H1 (cell line): ENCODE measurements at regions of chr4 and their contacts with region 1.

Region 1: GRCh38 chr4:73653695-73654106 is 33.5 kb upstream of the RASSF6 start:
- DNase-seq: no peak
- H3K4me3 ChIP-seq: no peak overlapping the region
- H3K27ac ChIP-seq: no peak overlapping the region
- H3K4me1 ChIP-seq: no peaks in the 10 kb centered on the region
- H3K27me3 ChIP-seq: peaks cover 0 to 2% (median 0%) of the 10 kb centered on the region in 4 experiments; a peak in 1 of 7 replicates
- CTCF ChIP-seq: peak; percentile 17 to 70 (median 44)
- EP300 ChIP-seq: no peak
- POLR2A ChIP-seq: no peak
- RAD21 ChIP-seq: peak; percentile 89 to 90

Region 2: DNA sequence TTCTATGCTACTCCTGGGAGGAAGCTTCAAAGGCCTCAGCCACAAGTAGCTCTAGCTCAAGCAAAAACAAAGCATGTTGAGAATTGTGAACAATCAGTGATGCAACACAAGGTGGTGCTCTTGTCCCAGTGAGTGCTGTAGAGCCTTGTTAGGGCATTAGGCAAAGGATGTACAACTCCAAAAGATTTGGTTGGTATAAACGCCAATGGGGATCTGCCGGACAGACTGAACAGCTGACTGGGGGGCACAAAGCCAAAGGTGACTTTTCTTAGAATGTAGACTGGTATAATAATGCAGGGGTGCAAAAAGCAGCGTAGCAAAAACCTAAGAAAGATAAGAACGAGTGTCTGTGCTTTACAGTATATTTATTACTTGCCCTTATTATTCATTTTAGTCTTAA is 312.2 kb before region 1 on chr4:
- CTCF ChIA-PET with region 1: interaction called, 49 read pairs
- POLR2A ChIA-PET with region 1: no interaction called
- DNase-seq: peak in 1 of 2 experiments; percentile 53
- H3K4me3 ChIP-seq: no peak overlapping the region
- H3K27ac ChIP-seq: no peak overlapping the region
- H3K4me1 ChIP-seq: peaks cover 0 to 5% (median 1%) of the 10 kb centered on the region in 4 experiments; a peak in 4 of 7 replicates
- H3K27me3 ChIP-seq: no peaks in the 10 kb centered on the region
- CTCF ChIP-seq: peak in 2 of 3 experiments; percentile 90 to 95; a peak in 3 of 4 replicates
- EP300 ChIP-seq: no peak
- POLR2A ChIP-seq: no peak
- RAD21 ChIP-seq: peak; percentile 98 to 100

Region 3: DNA sequence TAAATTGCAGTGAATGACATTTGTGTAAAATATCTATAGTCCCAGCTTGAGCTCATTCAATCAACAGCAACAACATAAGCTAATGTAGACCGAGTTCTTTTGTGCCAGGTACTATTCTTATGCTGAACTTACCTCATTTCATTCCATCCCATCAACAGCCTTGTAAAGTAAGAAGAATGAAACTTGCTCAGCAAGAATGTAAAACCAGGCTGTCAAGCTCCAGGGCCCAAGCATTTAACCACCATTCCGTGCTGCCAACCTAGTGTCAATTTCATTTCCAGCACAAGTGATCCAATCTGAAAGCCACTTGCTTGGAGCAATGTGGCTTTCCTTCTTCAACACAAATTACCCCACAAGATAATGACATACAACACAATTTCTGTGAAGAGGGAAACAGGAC is 70.0 kb before region 1 on chr4:
- CTCF ChIA-PET with region 1: interaction called, 12 read pairs
- POLR2A ChIA-PET with region 1: no interaction called
- DNase-seq: no peak
- H3K4me3 ChIP-seq: peak overlapping the region in 1 of 4 experiments; percentile 34; a peak in 2 of 8 replicates
- H3K27ac ChIP-seq: no peak overlapping the region
- H3K4me1 ChIP-seq: peaks cover 0 to 11% (median 1%) of the 10 kb centered on the region in 4 experiments; a peak in 2 of 7 replicates
- H3K27me3 ChIP-seq: peaks cover 0 to 1% (median 0%) of the 10 kb centered on the region in 4 experiments; a peak in 1 of 7 replicates
- CTCF ChIP-seq: no peak
- EP300 ChIP-seq: no peak
- POLR2A ChIP-seq: no peak
- RAD21 ChIP-seq: no peak

Region 4: GRCh38 chr4:73593631-73594241 is 60.0 kb before region 1 on chr4:
- CTCF ChIA-PET with region 1: interaction called, 32 read pairs
- POLR2A ChIA-PET with region 1: no interaction called
- DNase-seq: no peak
- H3K4me3 ChIP-seq: no peak overlapping the region
- H3K27ac ChIP-seq: no peak overlapping the region
- H3K4me1 ChIP-seq: peaks cover 0 to 3% (median 0%) of the 10 kb centered on the region in 4 experiments; a peak in 1 of 7 replicates
- H3K27me3 ChIP-seq: no peaks in the 10 kb centered on the region
- CTCF ChIP-seq: peak in 2 of 3 experiments; percentile 21 to 35; a peak in 2 of 4 replicates
- EP300 ChIP-seq: no peak
- POLR2A ChIP-seq: no peak
- RAD21 ChIP-seq: peak; percentile 35 to 38

Region 5: DNA sequence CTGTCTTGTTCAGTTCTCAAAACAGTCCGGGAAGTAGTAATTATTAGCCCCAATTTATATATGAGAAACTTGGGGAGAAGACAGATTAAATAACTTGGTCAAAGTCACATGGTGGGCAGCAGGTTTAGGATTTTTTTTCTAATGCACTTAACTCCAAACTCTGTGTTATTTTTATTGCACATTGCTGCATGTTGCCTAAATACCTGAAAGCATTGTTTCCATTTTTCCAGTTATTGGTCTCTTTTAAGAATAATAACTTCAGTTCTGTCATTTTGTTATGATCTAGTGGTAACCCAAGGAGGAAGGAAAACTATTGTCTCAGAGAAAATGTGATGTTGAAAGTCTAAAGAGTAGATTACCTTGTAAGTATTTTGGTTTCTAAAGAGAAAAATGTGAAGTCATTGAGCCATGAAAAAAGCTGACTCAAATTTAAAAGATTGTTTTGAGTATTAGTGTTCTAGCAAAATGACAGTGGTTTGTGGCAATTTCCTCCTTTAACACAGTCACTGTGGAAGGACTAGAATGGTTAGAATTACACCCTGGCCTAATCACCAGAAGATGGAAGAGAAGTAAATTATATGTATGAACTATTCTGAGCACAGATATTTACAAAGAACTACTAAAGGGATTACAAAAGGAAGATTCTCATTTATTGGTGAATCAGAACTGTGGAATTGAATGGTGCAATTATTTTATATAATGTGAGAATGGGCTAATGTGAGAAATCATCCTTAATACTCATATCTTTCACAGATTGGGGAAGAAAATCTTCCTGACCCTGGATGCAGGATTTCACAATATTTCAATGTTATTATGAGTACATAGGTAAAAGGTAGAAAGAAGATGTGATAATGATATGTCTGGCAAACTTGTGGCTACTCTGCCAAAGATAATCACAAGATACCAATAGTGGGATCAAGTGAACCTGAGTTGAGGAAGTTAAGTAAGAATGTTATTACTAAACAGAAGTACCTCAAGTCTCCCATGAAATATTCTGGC is 65.0 kb after region 1 on chr4:
- CTCF ChIA-PET with region 1: no interaction called
- POLR2A ChIA-PET with region 1: no interaction called
- DNase-seq: no peak
- H3K4me3 ChIP-seq: no peak overlapping the region
- H3K27ac ChIP-seq: no peak overlapping the region
- H3K4me1 ChIP-seq: no peaks in the 10 kb centered on the region
- H3K27me3 ChIP-seq: no peaks in the 10 kb centered on the region
- CTCF ChIP-seq: no peak
- EP300 ChIP-seq: no peak
- POLR2A ChIP-seq: no peak
- RAD21 ChIP-seq: no peak